ENCODE measurements at regions of chr5 and their contacts with region 1.

Region 1: DNA sequence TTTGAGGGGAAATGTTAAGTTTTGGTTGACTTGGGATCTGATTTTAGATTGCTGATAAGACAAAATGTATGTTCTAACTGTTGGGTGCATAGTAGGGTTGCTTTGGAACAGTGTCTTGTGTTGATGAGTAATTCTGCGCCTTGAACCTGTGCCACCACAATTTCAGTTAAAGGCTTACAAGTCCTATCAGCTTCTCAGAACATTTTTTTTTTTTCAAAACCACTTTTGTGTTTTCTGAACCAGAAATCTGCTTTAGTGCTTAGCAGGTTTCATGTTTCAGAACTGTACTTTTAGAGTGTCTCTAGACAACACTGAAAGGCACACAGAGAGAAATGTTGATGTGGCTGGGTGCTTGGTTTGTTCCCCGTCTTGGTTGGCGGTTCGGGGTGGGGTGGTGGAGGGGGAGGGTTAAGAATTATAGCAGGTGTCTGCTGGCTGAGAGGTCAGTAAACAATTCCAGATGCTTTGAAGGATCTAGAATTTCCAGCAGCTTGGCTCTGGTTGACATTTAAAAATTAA is 84.6 kb downstream of the ANKRD55 start:
- DNase-seq: peak; percentile 96
- ATAC-seq: peak; percentile 92
- H3K4me3 ChIP-seq: no peak overlapping the region
- H3K27ac ChIP-seq: peak overlapping the region; percentile 54; the same call in 1 of the 2 replicates
- H3K4me1 ChIP-seq: peaks cover 23% of the 10 kb centered on the region
- H3K27me3 ChIP-seq: no peaks in the 10 kb centered on the region; a peak in 1 of 4 replicates
- CTCF ChIP-seq: no peak
- EP300 ChIP-seq: peak; percentile 89 to 92
- POLR2A ChIP-seq: no peak
- RAD21 ChIP-seq: no peak

Region 2: DNA sequence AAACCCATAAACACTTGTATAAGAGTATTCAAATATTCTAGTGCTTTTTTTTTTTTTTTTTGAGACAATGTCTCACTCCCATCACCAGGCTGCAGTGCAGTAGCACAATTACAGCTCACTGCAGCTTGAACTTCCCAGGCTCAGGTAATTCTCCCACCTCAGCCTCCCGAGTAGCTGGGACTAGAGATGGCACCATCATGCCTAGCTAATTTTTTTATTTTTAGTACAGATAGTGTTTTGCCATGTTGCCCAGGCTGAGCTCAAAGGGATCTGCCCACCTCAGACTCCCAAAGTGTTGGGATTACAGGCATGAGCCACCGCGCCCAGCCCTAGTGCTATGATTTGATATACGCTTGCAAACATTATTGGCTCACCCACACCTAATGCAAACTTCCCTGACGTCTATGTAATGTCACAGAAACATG is 165.5 kb before region 1 on chr5:
- CTCF ChIA-PET with region 1: interaction called, 6 read pairs
- POLR2A ChIA-PET with region 1: no interaction called
- RAD21 ChIA-PET with region 1: interaction called, 8 read pairs
- SMC1A ChIA-PET with region 1: interaction called, 16 read pairs
- in situ Hi-C with region 1: no loop called
- intact Hi-C with region 1: loop called (anchors 5 kb)
- DNase-seq: no peak
- ATAC-seq: peak; percentile 28
- H3K4me3 ChIP-seq: no peak overlapping the region
- H3K27ac ChIP-seq: no peak overlapping the region
- H3K4me1 ChIP-seq: peaks cover 1% of the 10 kb centered on the region
- H3K27me3 ChIP-seq: no peaks in the 10 kb centered on the region
- CTCF ChIP-seq: peak in 2 of 3 experiments; percentile 14 to 50; a peak in 3 of 6 replicates
- EP300 ChIP-seq: no peak
- POLR2A ChIP-seq: no peak
- RAD21 ChIP-seq: peak; percentile 38

Region 3: GRCh38 chr5:55994574-55995333 is 153.8 kb before region 1 on chr5 and contains the start of gene IL6ST:
- CTCF ChIA-PET with region 1: interaction called, 3 read pairs
- POLR2A ChIA-PET with region 1: interaction called, 5 read pairs
- RAD21 ChIA-PET with region 1: interaction called, 10 read pairs
- SMC1A ChIA-PET with region 1: interaction called, 16 read pairs
- in situ Hi-C with region 1: loop called (anchors 5 kb)
- intact Hi-C with region 1: loop called (anchors 2 kb)
- DNase-seq: peak; percentile 78
- ATAC-seq: peak; percentile 91
- H3K4me3 ChIP-seq: peak within 1 kb of the TSS; percentile 93
- H3K27ac ChIP-seq: peak within 1 kb of the TSS; percentile 93
- H3K4me1 ChIP-seq: no peaks in the 10 kb centered on the region; the same call in none of the 2 replicates
- H3K27me3 ChIP-seq: no peaks in the 10 kb centered on the region
- CTCF ChIP-seq: peak in 1 of 3 experiments; percentile 19; a peak in 1 of 6 replicates
- EP300 ChIP-seq: no peak
- POLR2A ChIP-seq: peak; percentile 88
- RAD21 ChIP-seq: no peak
- polyA plus RNA-seq, gene IL6ST: 1.5 to 1.8 TPM

Region 4: GRCh38 chr5:56064984-56065383 is 83.5 kb before region 1 on chr5:
- CTCF ChIA-PET with region 1: interaction called, 4 read pairs
- POLR2A ChIA-PET with region 1: interaction called, 4 read pairs
- RAD21 ChIA-PET with region 1: interaction called, 9 read pairs
- SMC1A ChIA-PET with region 1: interaction called, 29 read pairs
- in situ Hi-C with region 1: no loop called
- intact Hi-C with region 1: no loop called
- DNase-seq: peak; percentile 95
- ATAC-seq: peak; percentile 68
- H3K4me3 ChIP-seq: no peak overlapping the region
- H3K27ac ChIP-seq: peak overlapping the region; percentile 28
- H3K4me1 ChIP-seq: peaks cover 16% of the 10 kb centered on the region
- H3K27me3 ChIP-seq: no peaks in the 10 kb centered on the region
- CTCF ChIP-seq: no peak
- EP300 ChIP-seq: peak in 1 of 2 experiments; percentile 91; a peak in 2 of 4 replicates
- POLR2A ChIP-seq: no peak
- RAD21 ChIP-seq: no peak

Region 5: GRCh38 chr5:56088967-56089829 is 59.3 kb before region 1 on chr5:
- CTCF ChIA-PET with region 1: interaction called, 20 read pairs
- POLR2A ChIA-PET with region 1: interaction called, 16 read pairs
- RAD21 ChIA-PET with region 1: interaction called, 27 read pairs
- SMC1A ChIA-PET with region 1: interaction called, 206 read pairs
- in situ Hi-C with region 1: no loop called
- intact Hi-C with region 1: no loop called
- DNase-seq: peak; percentile 74
- ATAC-seq: peak; percentile 95
- H3K4me3 ChIP-seq: no peak overlapping the region
- H3K27ac ChIP-seq: peak overlapping the region; percentile 41
- H3K4me1 ChIP-seq: peaks cover 8% of the 10 kb centered on the region
- H3K27me3 ChIP-seq: no peaks in the 10 kb centered on the region
- CTCF ChIP-seq: no peak
- EP300 ChIP-seq: no peak
- POLR2A ChIP-seq: no peak
- RAD21 ChIP-seq: no peak

Region 6: GRCh38 chr5:56105511-56106291 is 42.8 kb before region 1 on chr5:
- CTCF ChIA-PET with region 1: interaction called, 7 read pairs
- POLR2A ChIA-PET with region 1: interaction called, 10 read pairs
- RAD21 ChIA-PET with region 1: interaction called, 8 read pairs
- SMC1A ChIA-PET with region 1: interaction called, 16 read pairs
- in situ Hi-C with region 1: no loop called
- intact Hi-C with region 1: no loop called
- DNase-seq: no peak
- ATAC-seq: peak; percentile 78
- H3K4me3 ChIP-seq: no peak overlapping the region; the same call in 1 of the 2 replicates
- H3K27ac ChIP-seq: no peak overlapping the region
- H3K4me1 ChIP-seq: peaks cover 3% of the 10 kb centered on the region; the same call in 1 of the 2 replicates
- H3K27me3 ChIP-seq: no peaks in the 10 kb centered on the region; a peak in 1 of 4 replicates
- CTCF ChIP-seq: no peak
- EP300 ChIP-seq: 0 out of 4 replicates have a peak, but pooled peaks of 1 of the 2 experiments have one; percentile 16
- POLR2A ChIP-seq: no peak
- RAD21 ChIP-seq: no peak

Region 7: GRCh38 chr5:56757071-56757470 is 608.6 kb after region 1 on chr5:
- CTCF ChIA-PET with region 1: no interaction called
- POLR2A ChIA-PET with region 1: no interaction called
- RAD21 ChIA-PET with region 1: no interaction called
- SMC1A ChIA-PET with region 1: no interaction called
- in situ Hi-C with region 1: no loop called
- intact Hi-C with region 1: no loop called
- DNase-seq: no peak
- ATAC-seq: no peak
- H3K4me3 ChIP-seq: no peak overlapping the region
- H3K27ac ChIP-seq: no peak overlapping the region
- H3K4me1 ChIP-seq: no peaks in the 10 kb centered on the region
- H3K27me3 ChIP-seq: no peaks in the 10 kb centered on the region
- CTCF ChIP-seq: no peak
- EP300 ChIP-seq: no peak
- POLR2A ChIP-seq: no peak
- RAD21 ChIP-seq: no peak

Measured in GM12878 (cell line).